ENCODE measurements at regions of chr15 and their contacts with region 1.

Region 1: GRCh38 chr15:63473999-63474809 is 30.2 kb upstream of the USP3 start:
- DNase-seq: peak; percentile 85
- H3K4me3 Mint-ChIP-seq: peak overlapping the region; percentile 11
- H3K27ac Mint-ChIP-seq: peak overlapping the region; percentile 95
- H3K4me1 Mint-ChIP-seq: peaks cover 41% of the 10 kb centered on the region
- H3K27me3 Mint-ChIP-seq: no peaks in the 10 kb centered on the region

Region 2: GRCh38 chr15:63600616-63601025 is 126.4 kb after region 1 on chr15:
- intact Hi-C with region 1: loop called (anchors 2 kb)
- DNase-seq: peak; percentile 97
- H3K4me3 Mint-ChIP-seq: peak overlapping the region; percentile 93
- H3K27ac Mint-ChIP-seq: peak overlapping the region; percentile 91
- H3K4me1 Mint-ChIP-seq: peaks cover 49% of the 10 kb centered on the region
- H3K27me3 Mint-ChIP-seq: no peaks in the 10 kb centered on the region